Activated naive CD8-positive, alpha-beta T cell treated with anti-CD3 and anti-CD28 coated beads, Interleukin-2, amount 10 ng/mL, durations not matched to agents 7 days and 5 days (primary cell): ENCODE measurements at regions of chr19 and their contacts with region 1.

Region 1: GRCh38 chr19:4471403-4472173 is 509 bp upstream of the HDGFL2 start:
- DNase-seq: peak; percentile 90
- ATAC-seq: peak; percentile 88
- H3K4me3 Mint-ChIP-seq: no peak overlapping the region
- H3K27ac Mint-ChIP-seq: no peak overlapping the region
- H3K4me1 Mint-ChIP-seq: peaks cover 19% of the 10 kb centered on the region
- H3K27me3 Mint-ChIP-seq: no peaks in the 10 kb centered on the region

Region 2: GRCh38 chr19:4457654-4458395 is 13.8 kb before region 1 on chr19 and contains the start of gene UBXN6:
- POLR2A ChIA-PET with region 1: interaction called, 33 read pairs
- DNase-seq: peak; percentile 96
- ATAC-seq: peak; percentile 91
- H3K4me3 Mint-ChIP-seq: peak within 1 kb of the TSS; percentile 93
- H3K27ac Mint-ChIP-seq: peak within 1 kb of the TSS; percentile 93
- H3K4me1 Mint-ChIP-seq: peaks cover 15% of the 10 kb centered on the region
- H3K27me3 Mint-ChIP-seq: no peaks in the 10 kb centered on the region
- total RNA-seq, gene UBXN6: 50.0 to 56.7 TPM